HCT116 (cell line): ENCODE measurements at regions of chr11 and their contacts with region 1.

Region 1: DNA sequence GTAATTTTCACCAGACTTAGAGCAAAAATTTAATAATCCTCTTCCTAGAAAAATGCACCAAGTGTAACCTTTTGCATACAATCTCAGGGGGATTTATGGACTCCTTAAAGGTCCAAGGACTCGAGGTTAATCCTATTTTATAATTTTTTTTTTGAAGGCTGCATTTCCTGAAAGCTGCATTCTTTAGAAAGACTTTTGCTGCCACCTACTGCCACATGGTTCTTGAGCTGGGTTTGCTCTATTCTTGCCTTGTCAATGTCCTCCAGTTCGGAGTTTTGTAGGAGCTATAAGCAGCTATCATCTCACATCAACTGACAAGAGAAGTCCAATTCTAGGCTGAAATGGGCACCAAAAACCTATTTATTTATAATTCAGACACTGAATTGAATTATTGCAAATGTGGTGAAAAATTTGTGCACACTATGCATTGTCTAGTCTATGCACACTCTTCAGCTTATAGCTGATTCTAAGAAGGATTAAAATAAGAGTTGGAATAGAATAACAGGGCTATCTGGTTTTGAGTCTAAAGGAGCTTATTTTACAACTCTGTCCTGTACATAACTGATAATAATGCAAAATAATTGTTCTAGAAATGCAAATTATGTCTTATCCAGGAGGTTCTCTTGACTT is 31.3 kb downstream of the TRAF6 start:
- DNase-seq: peak; percentile 22
- ATAC-seq: peak; percentile 73
- H3K4me3 ChIP-seq: no peak overlapping the region
- H3K27ac ChIP-seq: no peak overlapping the region
- H3K4me1 ChIP-seq: no peaks in the 10 kb centered on the region
- H3K27me3 ChIP-seq: no peaks in the 10 kb centered on the region
- CTCF ChIP-seq: peak; percentile 40 to 64 (median 62); a peak in 4 of 6 replicates
- POLR2A ChIP-seq: no peak
- RAD21 ChIP-seq: peak; percentile 80

Region 2: DNA sequence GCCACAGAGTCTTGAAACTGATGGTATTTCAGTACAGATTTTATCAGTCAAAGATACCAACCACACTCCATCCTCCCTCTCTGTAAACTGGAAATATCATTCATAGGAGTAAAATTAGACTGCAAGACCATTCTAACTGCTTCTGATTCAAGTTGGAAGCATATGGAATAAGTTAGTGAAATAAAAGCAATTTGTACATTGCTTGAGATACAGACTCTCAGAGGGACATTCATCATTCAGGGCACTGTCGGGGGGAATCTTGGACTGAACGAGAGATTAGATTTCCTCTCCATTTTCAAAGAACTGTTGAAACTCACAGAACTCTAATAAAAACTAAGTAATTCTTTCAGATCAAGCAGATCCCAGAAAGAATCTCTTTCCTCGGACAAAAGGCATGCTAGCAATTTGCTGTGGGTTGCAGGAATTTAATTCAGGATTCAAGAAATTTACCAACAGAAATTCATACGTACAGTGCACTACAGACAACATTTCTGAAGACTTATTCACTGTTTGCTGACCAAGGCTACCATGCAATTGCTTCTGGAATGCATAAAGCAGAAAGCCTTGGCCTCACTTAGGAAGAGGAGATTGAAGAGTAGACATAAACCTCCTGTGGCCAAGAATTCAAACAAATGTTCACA is 987.5 kb before region 1 on chr11:
- CTCF ChIA-PET with region 1: no interaction called
- POLR2A ChIA-PET with region 1: no interaction called
- RAD21 ChIA-PET with region 1: no interaction called
- intact Hi-C with region 1: loop called (anchors 10 kb)
- DNase-seq: no peak
- ATAC-seq: no peak
- H3K4me3 ChIP-seq: no peak overlapping the region
- H3K27ac ChIP-seq: no peak overlapping the region
- H3K4me1 ChIP-seq: no peaks in the 10 kb centered on the region
- H3K27me3 ChIP-seq: no peaks in the 10 kb centered on the region
- CTCF ChIP-seq: no peak
- POLR2A ChIP-seq: no peak
- RAD21 ChIP-seq: no peak

Region 3: DNA sequence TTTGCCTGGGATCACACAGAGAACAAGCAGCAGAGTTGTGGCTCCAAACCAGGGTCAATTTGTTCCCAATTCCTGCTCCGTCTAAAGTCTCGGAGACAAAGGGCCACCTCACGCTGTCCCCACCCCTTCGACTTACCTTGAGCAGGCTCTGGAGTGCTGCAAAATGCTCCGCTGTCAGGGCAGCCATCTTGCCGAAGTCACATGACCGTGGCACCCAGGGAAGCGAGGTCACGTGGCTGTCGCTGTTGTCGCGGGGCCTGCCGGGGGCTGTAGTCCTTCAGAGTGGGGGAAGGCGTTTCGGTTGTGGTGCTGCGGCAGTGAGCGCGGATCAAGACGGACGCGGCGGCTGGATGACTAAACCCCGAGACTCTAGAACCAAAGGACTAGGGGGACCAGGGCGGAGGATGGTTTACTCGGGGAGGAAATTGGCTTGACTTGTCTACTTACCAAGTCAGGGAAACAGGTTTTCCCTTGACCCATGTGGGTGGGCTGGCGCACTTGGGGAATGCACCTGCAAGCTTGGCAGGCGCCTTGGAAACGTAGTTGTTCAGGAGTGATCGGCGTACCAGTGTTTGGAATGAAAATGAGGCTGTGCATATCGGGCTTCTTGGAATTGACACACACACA is 189.5 kb before region 1 on chr11 and contains the start of gene COMMD9:
- CTCF ChIA-PET with region 1: interaction called, 76 read pairs
- POLR2A ChIA-PET with region 1: interaction called, 3 read pairs
- RAD21 ChIA-PET with region 1: interaction called, 7 to 8 read pairs
- intact Hi-C with region 1: loop called (anchors 1 kb)
- DNase-seq: peak; percentile 88
- ATAC-seq: peak; percentile 96
- H3K4me3 ChIP-seq: peak within 1 kb of the TSS; percentile 66 to 74
- H3K27ac ChIP-seq: no peak within 1 kb of the TSS
- H3K4me1 ChIP-seq: peaks cover 0 to 12% of the 10 kb centered on the region in 2 experiments; a peak in 1 of 4 replicates
- H3K27me3 ChIP-seq: no peaks in the 10 kb centered on the region
- CTCF ChIP-seq: no peak
- POLR2A ChIP-seq: no peak
- RAD21 ChIP-seq: no peak
- total RNA-seq, gene COMMD9: 33.3 TPM

Region 4: GRCh38 chr11:36306888-36307287 is 171.9 kb before region 1 on chr11:
- CTCF ChIA-PET with region 1: interaction called, 22 read pairs
- POLR2A ChIA-PET with region 1: no interaction called
- RAD21 ChIA-PET with region 1: interaction called in 1 of 2 experiments, 3 read pairs
- intact Hi-C with region 1: loop called (anchors 1 kb)
- DNase-seq: peak; percentile 27
- ATAC-seq: peak; percentile 67
- H3K4me3 ChIP-seq: no peak overlapping the region
- H3K27ac ChIP-seq: no peak overlapping the region
- H3K4me1 ChIP-seq: peaks cover 0 to 6% of the 10 kb centered on the region in 2 experiments; a peak in 1 of 4 replicates
- H3K27me3 ChIP-seq: peaks cover 9% of the 10 kb centered on the region; the same call in 1 of the 2 replicates
- CTCF ChIP-seq: peak; percentile 50 to 61 (median 54); a peak in 4 of 6 replicates
- POLR2A ChIP-seq: no peak
- RAD21 ChIP-seq: peak; percentile 60